Endothelial cell of umbilical vein (primary cell): ENCODE measurements at regions of chr13 and their contacts with region 1.

Region 1: DNA sequence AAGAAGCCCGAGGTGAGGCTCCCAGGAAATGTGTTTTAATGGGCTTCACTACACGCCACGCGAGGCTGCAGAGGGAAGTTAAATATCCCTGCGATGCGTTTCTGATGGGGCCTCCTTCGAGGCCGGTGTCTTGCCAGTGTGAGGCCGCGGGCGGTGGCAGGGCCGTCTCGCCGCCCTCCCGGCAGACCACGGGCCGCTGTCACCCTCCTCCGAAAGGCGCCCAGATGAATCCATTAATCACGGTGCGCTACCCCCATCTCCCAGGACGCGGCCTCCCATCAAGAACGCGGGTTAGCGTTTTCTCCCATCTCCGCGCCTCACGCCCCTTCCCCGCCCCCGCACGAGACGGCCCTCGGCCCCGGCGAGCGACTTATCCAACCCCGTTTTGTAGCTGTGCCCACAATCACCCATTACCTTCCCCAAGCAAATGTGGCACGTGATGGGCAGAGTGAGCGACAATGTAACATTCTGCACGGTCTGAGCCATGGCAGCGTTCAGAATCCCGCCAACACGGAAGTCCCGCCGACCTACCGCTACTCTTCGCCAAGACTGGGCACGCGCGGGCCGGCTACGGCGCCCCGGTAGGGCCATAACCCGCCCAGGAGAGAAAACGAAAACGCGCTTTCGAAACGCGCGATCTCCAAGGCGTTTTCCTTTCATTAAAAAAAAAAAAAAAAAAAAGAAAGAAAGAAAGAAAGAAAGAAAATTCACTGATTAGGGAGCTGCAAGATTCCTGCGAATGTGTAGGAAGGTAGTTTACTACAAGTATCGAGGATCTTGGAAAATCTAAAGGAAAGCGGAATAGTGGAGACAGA is at the start of gene OBI1:
- DNase-seq: peak; percentile 91
- H3K4me3 ChIP-seq: peak within 1 kb of the TSS; percentile 50 to 97 (median 93)
- H3K27ac ChIP-seq: peak within 1 kb of the TSS; percentile 48
- H3K4me1 ChIP-seq: peaks cover 30% of the 10 kb centered on the region
- H3K27me3 ChIP-seq: no peaks in the 10 kb centered on the region
- CTCF ChIP-seq: no peak
- POLR2A ChIP-seq: peak; percentile 60
- total RNA-seq, gene OBI1: 14.6 and 16.1 TPM in 2 replicates

Region 2: GRCh38 chr13:78022164-78022877 is 636.5 kb before region 1 on chr13:
- CTCF ChIA-PET with region 1: no interaction called
- POLR2A ChIA-PET with region 1: no interaction called
- dilution Hi-C with region 1: no loop called
- intact Hi-C with region 1: loop called (anchors 10 kb)
- DNase-seq: peak; percentile 95
- H3K4me3 ChIP-seq: no peak overlapping the region
- H3K27ac ChIP-seq: peak overlapping the region; percentile 72
- H3K4me1 ChIP-seq: peaks cover 25% of the 10 kb centered on the region
- H3K27me3 ChIP-seq: no peaks in the 10 kb centered on the region
- CTCF ChIP-seq: no peak
- POLR2A ChIP-seq: no peak

Region 3: GRCh38 chr13:78045916-78046315 is 612.9 kb before region 1 on chr13:
- CTCF ChIA-PET with region 1: no interaction called
- POLR2A ChIA-PET with region 1: no interaction called
- dilution Hi-C with region 1: no loop called
- intact Hi-C with region 1: no loop called
- DNase-seq: peak; percentile 68
- H3K4me3 ChIP-seq: no peak overlapping the region
- H3K27ac ChIP-seq: peak overlapping the region; percentile 17
- H3K4me1 ChIP-seq: peaks cover 4% of the 10 kb centered on the region
- H3K27me3 ChIP-seq: no peaks in the 10 kb centered on the region
- CTCF ChIP-seq: no peak
- POLR2A ChIP-seq: no peak

Region 4: GRCh38 chr13:78147905-78148304 is 510.9 kb before region 1 on chr13:
- CTCF ChIA-PET with region 1: no interaction called
- POLR2A ChIA-PET with region 1: no interaction called
- dilution Hi-C with region 1: no loop called
- intact Hi-C with region 1: loop called (anchors 5 kb)
- DNase-seq: peak; percentile 75
- H3K4me3 ChIP-seq: no peak overlapping the region
- H3K27ac ChIP-seq: peak overlapping the region; percentile 82
- H3K4me1 ChIP-seq: peaks cover 21% of the 10 kb centered on the region
- H3K27me3 ChIP-seq: no peaks in the 10 kb centered on the region
- CTCF ChIP-seq: no peak
- POLR2A ChIP-seq: no peak

Region 5: DNA sequence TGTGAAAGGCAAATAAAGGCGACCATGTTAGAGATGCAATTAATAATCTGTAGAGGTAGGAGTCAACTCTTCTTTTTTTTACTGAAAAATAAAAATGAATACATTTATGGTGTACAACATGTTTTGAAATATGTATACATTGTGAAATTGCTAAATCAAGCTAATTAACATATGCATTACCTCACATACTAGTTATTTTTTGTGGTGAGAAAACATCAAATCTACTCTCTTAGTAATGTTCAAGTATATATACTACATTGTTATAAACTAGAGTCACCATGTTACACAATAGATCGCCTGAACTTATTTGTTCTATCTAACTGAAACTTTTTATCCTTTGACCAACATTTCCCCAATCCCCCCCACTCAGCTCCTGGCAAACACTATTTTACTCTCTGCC is 198.7 kb before region 1 on chr13:
- CTCF ChIA-PET with region 1: no interaction called
- POLR2A ChIA-PET with region 1: no interaction called
- dilution Hi-C with region 1: no loop called
- intact Hi-C with region 1: no loop called
- DNase-seq: no peak
- H3K4me3 ChIP-seq: no peak overlapping the region
- H3K27ac ChIP-seq: no peak overlapping the region
- H3K4me1 ChIP-seq: no peaks in the 10 kb centered on the region
- H3K27me3 ChIP-seq: no peaks in the 10 kb centered on the region
- CTCF ChIP-seq: no peak
- POLR2A ChIP-seq: no peak

Region 6: DNA sequence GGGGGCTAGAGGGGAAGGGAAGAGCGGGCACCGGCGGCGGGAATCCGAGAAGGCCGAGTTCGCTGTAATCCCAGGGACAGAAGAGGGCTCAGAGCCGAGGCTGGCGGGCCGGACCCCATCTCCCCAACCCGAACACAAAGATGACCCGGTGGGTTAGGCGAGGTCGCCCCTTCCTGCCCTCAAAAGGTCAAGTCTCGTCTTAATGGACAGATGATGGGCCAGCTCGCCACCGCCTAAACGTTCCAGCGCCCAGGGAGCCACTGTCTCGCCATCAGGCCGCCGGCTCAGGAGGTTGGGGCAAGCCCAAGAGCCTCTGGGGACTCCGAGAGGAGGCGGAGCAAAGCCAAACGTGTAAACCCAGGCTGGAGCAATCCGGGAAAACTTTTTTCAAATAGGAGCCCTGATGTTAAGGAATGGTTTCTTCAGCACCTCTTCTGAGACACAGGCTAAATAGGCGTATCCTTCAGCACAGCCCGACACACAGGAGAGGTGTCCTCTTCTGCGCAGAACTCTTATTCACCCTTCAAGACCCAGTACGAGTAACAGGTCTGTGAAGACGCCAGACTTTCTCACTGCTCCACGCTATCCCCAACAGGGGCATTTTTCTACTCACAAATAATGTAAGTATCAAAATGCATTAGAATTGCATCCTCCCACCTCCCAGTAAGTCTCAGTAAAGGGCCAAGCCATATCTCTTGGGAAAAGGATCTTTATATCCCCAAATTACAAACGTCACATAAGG is 49.2 kb before region 1 on chr13:
- CTCF ChIA-PET with region 1: interaction called, 3 read pairs
- POLR2A ChIA-PET with region 1: no interaction called
- dilution Hi-C with region 1: no loop called
- intact Hi-C with region 1: loop called (anchors 2 kb)
- DNase-seq: peak; percentile 30
- H3K4me3 ChIP-seq: peak overlapping the region; percentile 43 to 79 (median 64)
- H3K27ac ChIP-seq: no peak overlapping the region
- H3K4me1 ChIP-seq: peaks cover 7% of the 10 kb centered on the region
- H3K27me3 ChIP-seq: peaks cover 27 to 50% of the 10 kb centered on the region in 2 experiments
- CTCF ChIP-seq: no peak
- POLR2A ChIP-seq: no peak